BJ (cell line): ENCODE measurements at regions of chr1 and their contacts with region 1.

Region 1: GRCh38 chr1:174153085-174153825 is 6.1 kb upstream of the RABGAP1L start:
- DNase-seq: no peak
- H3K4me3 ChIP-seq: no peak overlapping the region
- H3K27me3 ChIP-seq: no peaks in the 10 kb centered on the region
- CTCF ChIP-seq: no peak

Region 2: DNA sequence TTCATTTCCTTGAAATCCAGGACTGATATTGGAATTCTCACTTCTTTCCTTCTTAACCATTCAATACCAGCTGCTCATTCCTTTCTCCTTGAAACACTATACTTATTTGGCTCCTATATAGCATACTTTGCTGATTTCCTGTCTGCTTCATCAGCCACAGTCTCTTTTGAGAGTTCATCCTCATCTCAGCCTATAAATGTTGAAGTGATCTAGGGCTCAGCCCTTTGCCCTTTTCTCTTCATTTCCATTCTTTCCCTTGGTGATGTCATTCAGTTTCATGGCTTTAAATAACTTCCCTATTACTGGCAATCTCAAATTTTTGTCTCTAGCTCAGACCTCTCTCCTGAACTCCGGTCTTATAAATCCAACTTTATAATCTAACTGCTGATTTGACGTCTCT is 18.0 kb before region 1 on chr1:
- CTCF ChIA-PET with region 1: interaction called, 3 read pairs
- POLR2A ChIA-PET with region 1: interaction called, 11 read pairs
- DNase-seq: no peak
- H3K4me3 ChIP-seq: no peak overlapping the region
- H3K27me3 ChIP-seq: no peaks in the 10 kb centered on the region
- CTCF ChIP-seq: no peak

Region 3: DNA sequence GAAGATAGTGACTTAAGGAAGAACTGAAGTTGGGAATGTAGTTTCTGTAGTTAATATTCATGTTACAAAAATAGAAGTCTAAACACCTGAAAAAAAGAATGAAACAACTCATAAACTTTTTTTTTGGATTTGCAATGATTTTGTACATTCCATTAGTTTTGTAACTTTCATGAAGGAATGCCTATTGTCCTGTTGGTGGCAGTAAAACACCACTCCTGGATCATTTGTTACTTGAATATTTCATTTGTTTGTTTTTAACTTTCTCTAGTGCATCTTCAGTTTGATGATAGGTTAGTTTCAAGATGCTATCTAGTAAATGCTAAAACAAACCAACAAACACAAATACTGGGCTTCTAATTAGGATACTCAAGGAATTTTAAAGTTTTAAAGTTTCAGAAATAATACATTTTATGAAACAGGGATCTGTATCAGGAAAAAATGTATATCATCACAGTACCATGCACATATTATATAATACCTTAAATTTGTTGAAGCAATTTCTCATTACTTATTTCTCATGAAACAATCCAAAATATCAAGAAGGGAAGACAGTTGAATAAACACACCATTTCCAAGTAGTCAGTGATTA is 616.8 kb after region 1 on chr1:
- CTCF ChIA-PET with region 1: no interaction called
- POLR2A ChIA-PET with region 1: no interaction called
- DNase-seq: peak; percentile 18
- H3K4me3 ChIP-seq: no peak overlapping the region
- H3K27me3 ChIP-seq: no peaks in the 10 kb centered on the region
- CTCF ChIP-seq: peak; percentile 69